Right cardiac atrium (tissue), 5 donors: ENCODE measurements at regions of chr11 and their contacts with region 1.

Region 1: GRCh38 chr11:12099132-12099873 is 11.1 kb upstream of the MICAL2 start:
- DNase-seq: no peak
- ATAC-seq: peak in 1 of 2 donors; percentile 61
- H3K4me3 ChIP-seq: no peak overlapping the region
- H3K27ac ChIP-seq: no peak overlapping the region
- H3K4me1 ChIP-seq: peaks cover 9% of the 10 kb centered on the region
- H3K27me3 ChIP-seq: no peaks in the 10 kb centered on the region

Region 2: GRCh38 chr11:12167098-12168000 is 68.0 kb after region 1 on chr11:
- intact Hi-C with region 1: loop called in 1 of 4 experiments (anchors 5 kb)
- DNase-seq: peak in 1 of 3 donors; percentile 33
- ATAC-seq: peak; percentile 7 to 55
- H3K4me3 ChIP-seq: no peak overlapping the region
- H3K27ac ChIP-seq: peak overlapping the region; percentile 93
- H3K4me1 ChIP-seq: peaks cover 21% of the 10 kb centered on the region
- H3K27me3 ChIP-seq: no peaks in the 10 kb centered on the region